Left cardiac atrium (tissue), 4 donors: ENCODE measurements at regions of chr12 and their contacts with region 1.

Region 1: GRCh38 chr12:41731691-41732090 is 413.0 kb downstream of the GXYLT1 start:
- DNase-seq: no peak
- ATAC-seq: no peak

Region 2: GRCh38 chr12:41697161-41697560 is 34.5 kb before region 1 on chr12:
- intact Hi-C with region 1: no loop called
- DNase-seq: no peak
- ATAC-seq: no peak

Region 3: GRCh38 chr12:41769810-41770209 is 38.1 kb after region 1 on chr12:
- intact Hi-C with region 1: loop called in 1 of 2 experiments (anchors 2 kb)
- DNase-seq: no peak
- ATAC-seq: no peak